ENCODE measurements at regions of chr12 and their contacts with region 1.

Region 1: GRCh38 chr12:10374624-10375018 is 15.2 kb downstream of the KLRK1 start:
- DNase-seq: no peak
- H3K4me3 ChIP-seq: no peak overlapping the region
- H3K27ac ChIP-seq: no peak overlapping the region
- H3K4me1 ChIP-seq: no peaks in the 10 kb centered on the region
- H3K27me3 ChIP-seq: no peaks in the 10 kb centered on the region
- CTCF ChIP-seq: no peak

Region 2: DNA sequence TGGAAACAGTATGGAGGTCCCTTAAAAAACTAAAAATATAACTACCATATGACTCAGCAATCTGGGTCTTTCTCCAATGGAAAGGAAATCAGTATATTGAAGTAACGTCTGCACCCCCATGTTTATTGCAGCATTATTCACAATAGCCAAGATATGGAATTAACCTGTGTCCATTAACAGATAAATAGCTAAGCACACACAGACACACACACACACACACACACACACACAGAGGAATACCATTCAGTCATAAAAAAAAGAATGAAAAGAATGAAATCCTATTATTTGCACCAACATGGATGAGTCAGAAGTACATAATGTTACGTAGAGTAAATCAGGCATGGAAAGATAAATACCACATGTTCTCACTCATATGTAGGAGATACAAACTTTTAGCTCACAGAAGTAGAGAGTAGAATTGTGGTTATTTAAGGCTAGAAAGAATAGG is 10.6 kb after region 1 on chr12:
- CTCF ChIA-PET with region 1: interaction called, 10 read pairs
- POLR2A ChIA-PET with region 1: no interaction called
- intact Hi-C with region 1: no loop called
- DNase-seq: peak; percentile 39
- H3K4me3 ChIP-seq: no peak overlapping the region
- H3K27ac ChIP-seq: no peak overlapping the region
- H3K4me1 ChIP-seq: no peaks in the 10 kb centered on the region
- H3K27me3 ChIP-seq: no peaks in the 10 kb centered on the region
- CTCF ChIP-seq: no peak

Measured in A673 (cell line).